Mammary epithelial cell (primary cell): ENCODE measurements at regions of chr3 and their contacts with region 1.

Region 1: GRCh38 chr3:69252631-69253030 is 130.2 kb upstream of the LMOD3 start:
- DNase-seq: peak; percentile 85
- H3K4me3 ChIP-seq: no peak overlapping the region
- H3K27ac ChIP-seq: no peak overlapping the region
- H3K4me1 ChIP-seq: peaks cover 11% of the 10 kb centered on the region
- H3K27me3 ChIP-seq: no peaks in the 10 kb centered on the region
- CTCF ChIP-seq: no peak

Region 2: GRCh38 chr3:69013253-69014021 is 239.2 kb before region 1 on chr3 and contains the start of gene EOGT:
- CTCF ChIA-PET with region 1: interaction called, 26 read pairs
- dilution Hi-C with region 1: no loop called
- in situ Hi-C with region 1: no loop called
- intact Hi-C with region 1: no loop called
- DNase-seq: peak; percentile 85
- H3K4me3 ChIP-seq: peak within 1 kb of the TSS; percentile 67 to 83 (median 82)
- H3K27ac ChIP-seq: peak within 1 kb of the TSS; percentile 87
- H3K4me1 ChIP-seq: peaks cover 49% of the 10 kb centered on the region
- H3K27me3 ChIP-seq: no peaks in the 10 kb centered on the region
- CTCF ChIP-seq: peak; percentile 26 to 73
- total RNA-seq, gene EOGT: 52.4 to 194 TPM

Region 3: GRCh38 chr3:69191516-69191915 is 61.1 kb before region 1 on chr3:
- CTCF ChIA-PET with region 1: no interaction called
- dilution Hi-C with region 1: loop called (anchors 5 kb)
- in situ Hi-C with region 1: no loop called
- intact Hi-C with region 1: no loop called
- DNase-seq: no peak
- H3K4me3 ChIP-seq: no peak overlapping the region
- H3K27ac ChIP-seq: no peak overlapping the region
- H3K4me1 ChIP-seq: no peaks in the 10 kb centered on the region
- H3K27me3 ChIP-seq: no peaks in the 10 kb centered on the region
- CTCF ChIP-seq: no peak

Region 4: DNA sequence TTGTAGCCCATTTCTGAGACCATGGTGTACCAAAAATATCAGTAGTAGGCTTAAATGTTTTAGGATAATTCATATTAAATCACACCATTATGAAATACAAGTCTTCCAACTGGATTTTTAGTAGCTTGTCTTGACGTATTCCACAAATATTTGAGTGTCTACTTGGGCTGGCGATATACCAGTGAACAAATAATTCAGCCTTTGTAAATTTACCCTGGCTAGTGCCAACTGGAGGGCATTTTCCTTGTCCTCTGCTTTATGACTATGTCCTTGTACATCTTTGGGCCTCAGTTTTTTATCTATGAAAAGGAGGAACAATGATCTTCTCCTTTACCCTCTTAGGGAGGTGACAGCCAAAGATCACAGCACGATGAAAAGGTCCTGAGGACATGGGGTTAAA is 18.5 kb after region 1 on chr3:
- CTCF ChIA-PET with region 1: no interaction called
- dilution Hi-C with region 1: no loop called
- in situ Hi-C with region 1: no loop called
- intact Hi-C with region 1: no loop called
- DNase-seq: no peak
- H3K4me3 ChIP-seq: no peak overlapping the region
- H3K27ac ChIP-seq: no peak overlapping the region
- H3K4me1 ChIP-seq: peaks cover 6% of the 10 kb centered on the region
- H3K27me3 ChIP-seq: no peaks in the 10 kb centered on the region
- CTCF ChIP-seq: no peak

Region 5: DNA sequence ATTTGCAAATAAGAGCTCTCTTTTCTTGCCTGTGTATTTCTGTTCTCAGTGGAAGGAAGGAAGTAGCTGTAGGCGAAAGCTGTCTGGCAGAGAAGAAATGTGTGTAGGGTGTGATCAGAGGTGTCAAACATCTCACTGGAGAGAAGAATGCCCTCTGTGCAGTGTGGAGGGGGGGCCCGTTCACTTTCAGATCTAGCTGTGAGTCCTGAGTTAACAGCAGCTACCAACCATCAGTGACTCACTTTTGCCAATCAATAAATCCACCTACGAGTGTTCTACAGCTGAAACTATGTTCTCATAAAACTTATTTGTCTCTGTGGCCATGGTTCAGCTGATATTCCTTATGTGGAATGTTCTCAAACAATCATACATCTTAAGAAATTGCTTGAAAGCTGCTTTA is 29.6 kb after region 1 on chr3:
- CTCF ChIA-PET with region 1: no interaction called
- dilution Hi-C with region 1: no loop called
- in situ Hi-C with region 1: no loop called
- intact Hi-C with region 1: no loop called
- DNase-seq: peak; percentile 65
- H3K4me3 ChIP-seq: no peak overlapping the region
- H3K27ac ChIP-seq: no peak overlapping the region
- H3K4me1 ChIP-seq: no peaks in the 10 kb centered on the region
- H3K27me3 ChIP-seq: no peaks in the 10 kb centered on the region
- CTCF ChIP-seq: no peak